ENCODE measurements at regions of chr22 and their contacts with region 1.

Region 1: DNA sequence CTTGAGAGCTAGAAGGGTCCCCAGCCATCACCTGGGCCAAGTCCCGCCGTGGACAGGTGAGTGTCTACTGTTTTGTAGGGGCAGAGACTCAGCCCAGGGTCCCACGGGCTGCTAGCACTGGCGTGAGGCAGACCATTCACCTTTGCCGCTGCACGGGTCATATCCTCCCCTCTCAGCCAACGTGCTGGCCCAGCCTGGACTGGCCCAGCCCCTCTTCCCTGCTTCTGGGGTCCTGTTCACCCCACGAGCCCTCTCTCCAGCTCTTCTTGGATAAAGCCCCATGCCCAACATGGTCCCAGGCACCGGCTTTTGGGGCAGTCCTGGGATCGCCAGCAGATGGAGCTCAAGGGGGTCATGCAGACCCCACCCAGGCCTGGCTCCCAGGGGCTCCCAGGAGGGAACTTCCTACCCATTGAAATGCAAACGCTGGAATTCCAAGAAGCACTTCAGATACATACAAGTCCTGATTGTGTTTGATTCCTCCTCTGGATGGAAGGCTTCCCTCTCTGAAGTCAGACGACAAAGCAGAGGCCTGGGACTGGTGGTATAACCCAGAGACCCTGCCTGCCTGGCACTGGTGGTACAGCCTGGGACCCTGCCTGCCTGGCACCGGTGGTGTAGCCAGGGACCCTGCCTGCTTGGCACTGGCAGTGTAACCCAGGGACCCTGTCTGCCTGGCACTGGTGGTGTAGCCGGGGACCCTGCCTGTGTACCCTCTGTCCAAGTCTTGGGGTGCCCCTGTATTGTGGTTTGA is 8.9 kb upstream of the SEPTIN5 start:
- DNase-seq: peak; percentile 90 to 91
- H3K4me3 ChIP-seq: no peak overlapping the region
- H3K27ac ChIP-seq: peak overlapping the region; percentile 46; the same call in 1 of the 2 replicates
- H3K4me1 ChIP-seq: peaks cover 0 to 24% (median 16%) of the 10 kb centered on the region in 4 experiments; a peak in 6 of 7 replicates
- H3K27me3 ChIP-seq: peaks cover 0 to 8% (median 7%) of the 10 kb centered on the region in 4 experiments; a peak in 4 of 7 replicates
- CTCF ChIP-seq: peak; percentile 71 to 83 (median 72)
- EP300 ChIP-seq: peak in 1 of 2 experiments; percentile 94; a peak in 2 of 3 replicates
- POLR2A ChIP-seq: no peak
- RAD21 ChIP-seq: peak; percentile 33 to 58

Region 2: DNA sequence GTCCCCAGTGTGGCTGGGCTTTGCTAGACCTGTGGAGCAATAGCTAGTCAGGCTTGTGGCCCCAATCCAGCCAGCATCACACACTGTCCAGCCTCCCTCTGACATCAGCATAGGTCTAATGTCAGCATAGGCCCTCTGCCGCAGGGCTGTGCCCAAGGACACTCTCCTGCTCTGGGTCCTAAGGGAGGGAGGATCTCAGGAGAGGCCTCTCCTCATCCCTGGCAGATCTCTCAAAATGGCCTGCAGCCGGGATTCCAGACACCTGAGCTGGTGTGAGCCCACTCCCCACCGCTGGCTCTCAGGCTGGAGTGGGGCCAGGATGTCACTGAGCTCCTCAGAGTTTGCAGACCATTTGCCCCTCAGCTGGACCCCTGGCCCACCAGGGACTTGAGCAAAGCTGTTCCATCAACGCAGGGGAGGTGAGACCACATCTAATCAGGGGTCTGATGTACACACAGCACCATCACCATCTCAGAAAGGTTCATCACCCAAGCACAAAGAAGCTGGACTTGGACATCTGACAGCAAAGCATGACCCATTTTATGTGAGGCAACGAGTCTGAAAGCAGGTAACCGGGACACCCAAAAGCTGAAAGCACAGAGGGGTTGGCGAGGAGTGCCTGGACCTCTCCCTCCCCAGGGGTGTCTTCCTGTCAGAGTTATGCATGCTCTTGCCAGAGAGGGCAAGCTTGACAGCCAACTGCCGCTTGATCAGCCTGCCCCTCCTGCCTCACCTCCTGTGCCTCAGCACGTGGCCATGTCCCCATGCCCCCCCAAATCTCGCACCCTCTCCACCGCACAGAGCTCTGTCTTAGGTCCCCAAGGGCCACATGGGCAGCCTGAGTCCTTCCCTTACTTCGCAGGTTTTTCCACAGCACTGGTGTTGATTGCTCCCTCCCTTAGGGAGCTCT is 60.8 kb before region 1 on chr22:
- CTCF ChIA-PET with region 1: interaction called, 11 read pairs
- POLR2A ChIA-PET with region 1: no interaction called
- DNase-seq: no peak
- H3K4me3 ChIP-seq: no peak overlapping the region
- H3K27ac ChIP-seq: no peak overlapping the region
- H3K4me1 ChIP-seq: peaks cover 0 to 2% (median 0%) of the 10 kb centered on the region in 4 experiments; a peak in 4 of 7 replicates
- H3K27me3 ChIP-seq: peaks cover 0 to 2% (median under 1%) of the 10 kb centered on the region in 4 experiments; a peak in 2 of 7 replicates
- CTCF ChIP-seq: no peak
- EP300 ChIP-seq: no peak
- POLR2A ChIP-seq: no peak
- RAD21 ChIP-seq: no peak

Region 3: GRCh38 chr22:19691721-19692341 is 13.5 kb before region 1 on chr22:
- CTCF ChIA-PET with region 1: interaction called, 20 read pairs
- POLR2A ChIA-PET with region 1: interaction called, 5 read pairs
- DNase-seq: no peak
- H3K4me3 ChIP-seq: no peak overlapping the region
- H3K27ac ChIP-seq: no peak overlapping the region
- H3K4me1 ChIP-seq: peaks cover 0 to 11% (median 5%) of the 10 kb centered on the region in 4 experiments; a peak in 6 of 7 replicates
- H3K27me3 ChIP-seq: no peaks in the 10 kb centered on the region
- CTCF ChIP-seq: no peak
- EP300 ChIP-seq: no peak
- POLR2A ChIP-seq: no peak
- RAD21 ChIP-seq: no peak

Region 4: DNA sequence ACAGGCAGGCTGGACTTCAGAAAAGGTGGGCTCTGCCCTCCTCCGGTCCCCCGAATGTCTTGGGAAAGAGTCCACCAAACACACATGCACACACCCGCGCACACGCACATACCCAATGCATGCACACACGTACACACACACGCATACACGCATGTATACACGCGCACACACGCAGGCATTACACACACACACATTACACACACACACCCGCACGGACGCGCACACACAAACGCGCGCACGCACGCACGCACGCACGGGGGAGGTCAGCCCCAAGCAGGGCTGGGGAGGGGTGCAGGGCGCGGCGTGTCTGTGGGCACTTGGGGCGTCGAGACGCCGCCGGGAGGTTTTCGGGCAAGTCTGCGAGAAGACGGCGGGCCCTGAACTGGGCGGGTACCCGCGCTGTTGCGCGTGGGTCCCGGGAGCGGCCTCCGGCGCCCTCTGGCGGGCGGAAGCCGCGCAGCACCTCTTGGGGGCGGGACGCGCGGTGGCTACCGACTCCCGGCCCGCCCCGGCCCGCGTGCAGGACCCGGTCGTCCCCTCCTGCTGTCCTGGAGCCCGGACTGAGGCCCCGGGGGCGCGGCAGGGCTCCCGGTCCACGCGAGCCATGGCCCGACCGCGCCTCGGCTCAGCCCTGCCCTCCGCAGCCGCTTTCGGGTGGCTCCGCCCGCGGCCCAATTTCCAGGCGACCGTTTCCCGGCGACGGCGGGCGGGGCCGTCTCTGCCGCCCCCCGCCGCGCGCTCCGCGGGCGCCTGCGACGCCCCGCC is 12.5 kb after region 1 on chr22:
- CTCF ChIA-PET with region 1: interaction called, 24 read pairs
- POLR2A ChIA-PET with region 1: no interaction called
- DNase-seq: peak in 1 of 2 experiments; percentile 92
- H3K4me3 ChIP-seq: peak overlapping the region; percentile 0 to 65 (median 36); a peak in 6 of 8 replicates
- H3K27ac ChIP-seq: no peak overlapping the region
- H3K4me1 ChIP-seq: peaks cover 0 to 30% (median 18%) of the 10 kb centered on the region in 4 experiments; a peak in 5 of 7 replicates
- H3K27me3 ChIP-seq: peaks cover 47 to 96% (median 80%) of the 10 kb centered on the region in 4 experiments
- CTCF ChIP-seq: peak; percentile 76 to 94 (median 78)
- EP300 ChIP-seq: no peak
- POLR2A ChIP-seq: no peak
- RAD21 ChIP-seq: peak; percentile 66 to 84